ENCODE measurements at regions of chrX and their contacts with region 1.

Region 1: GRCh38 chrX:8743126-8743732 is 11.3 kb upstream of the ANOS1 start:
- DNase-seq: no peak
- H3K4me3 ChIP-seq: no peak overlapping the region
- H3K27ac ChIP-seq: no peak overlapping the region
- H3K27me3 ChIP-seq: no peaks in the 10 kb centered on the region
- CTCF ChIP-seq: peak; percentile 75

Region 2: GRCh38 chrX:7996414-7996813 is 746.8 kb before region 1 on chrX:
- CTCF ChIA-PET with region 1: interaction called, 23 read pairs
- POLR2A ChIA-PET with region 1: no interaction called
- DNase-seq: no peak
- H3K4me3 ChIP-seq: no peak overlapping the region
- H3K27ac ChIP-seq: no peak overlapping the region
- H3K27me3 ChIP-seq: no peaks in the 10 kb centered on the region
- CTCF ChIP-seq: peak; percentile 50

Region 3: GRCh38 chrX:8005678-8006347 is 737.4 kb before region 1 on chrX:
- CTCF ChIA-PET with region 1: interaction called, 14 read pairs
- POLR2A ChIA-PET with region 1: no interaction called
- DNase-seq: no peak
- H3K4me3 ChIP-seq: no peak overlapping the region
- H3K27ac ChIP-seq: no peak overlapping the region
- H3K27me3 ChIP-seq: no peaks in the 10 kb centered on the region
- CTCF ChIP-seq: no peak

Region 4: GRCh38 chrX:8730812-8731558 is 12.2 kb before region 1 on chrX:
- CTCF ChIA-PET with region 1: interaction called, 11 read pairs
- POLR2A ChIA-PET with region 1: no interaction called
- DNase-seq: no peak
- H3K4me3 ChIP-seq: peak overlapping the region; percentile 44
- H3K27ac ChIP-seq: no peak overlapping the region
- H3K27me3 ChIP-seq: peaks cover 27% of the 10 kb centered on the region
- CTCF ChIP-seq: no peak

Region 5: DNA sequence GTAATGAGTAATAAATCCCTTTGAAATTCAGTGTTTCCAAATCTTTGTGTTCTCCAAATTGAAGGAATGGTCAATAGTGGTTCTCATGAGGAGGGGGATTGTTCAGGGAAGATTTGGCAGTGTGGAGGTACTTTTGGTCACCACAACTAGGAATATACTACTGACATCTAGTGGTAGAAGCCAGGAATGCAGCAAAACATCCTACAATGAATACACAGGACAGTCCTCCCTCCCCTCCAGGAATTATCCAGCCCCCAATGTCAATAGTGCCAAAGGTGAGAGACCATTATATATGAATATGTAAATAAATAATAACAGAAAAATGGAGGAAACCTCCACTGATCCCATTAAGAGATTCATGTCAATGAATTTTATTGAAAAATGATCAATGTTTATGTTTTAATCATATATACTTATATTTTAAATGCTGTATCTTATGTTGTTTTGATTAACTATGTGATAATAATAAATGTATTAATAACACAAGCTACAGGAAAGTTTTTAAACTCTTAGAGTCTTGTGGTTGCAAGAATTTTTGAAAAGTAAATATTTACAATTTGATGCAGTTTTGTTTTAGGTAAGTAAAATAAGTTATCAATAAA is 72.3 kb after region 1 on chrX:
- CTCF ChIA-PET with region 1: interaction called, 91 read pairs
- POLR2A ChIA-PET with region 1: no interaction called
- DNase-seq: peak; percentile 2
- H3K4me3 ChIP-seq: no peak overlapping the region
- H3K27ac ChIP-seq: no peak overlapping the region
- H3K27me3 ChIP-seq: no peaks in the 10 kb centered on the region
- CTCF ChIP-seq: peak; percentile 77

Region 6: GRCh38 chrX:8887004-8887403 is 143.8 kb after region 1 on chrX:
- CTCF ChIA-PET with region 1: no interaction called
- POLR2A ChIA-PET with region 1: no interaction called
- DNase-seq: no peak
- H3K4me3 ChIP-seq: no peak overlapping the region
- H3K27ac ChIP-seq: no peak overlapping the region
- H3K27me3 ChIP-seq: no peaks in the 10 kb centered on the region
- CTCF ChIP-seq: no peak

Region 7: GRCh38 chrX:8955511-8955910 is 212.3 kb after region 1 on chrX:
- CTCF ChIA-PET with region 1: no interaction called
- POLR2A ChIA-PET with region 1: no interaction called
- DNase-seq: no peak
- H3K4me3 ChIP-seq: no peak overlapping the region
- H3K27ac ChIP-seq: no peak overlapping the region
- H3K27me3 ChIP-seq: peaks cover 5% of the 10 kb centered on the region
- CTCF ChIP-seq: no peak

Measured in AG04450 (cell line).